B cell (primary cell): ENCODE measurements at regions of chr21 and their contacts with region 1.

Region 1: GRCh38 chr21:42117229-42117966 is 46.3 kb downstream of the UMODL1 start:
- DNase-seq: peak; percentile 82
- ATAC-seq: peak; percentile 81
- H3K4me3 ChIP-seq: no peak overlapping the region
- H3K4me3 Mint-ChIP-seq: peak overlapping the region; percentile 38
- H3K27ac ChIP-seq: no peak overlapping the region
- H3K27ac Mint-ChIP-seq: no peak overlapping the region
- H3K4me1 ChIP-seq: peaks cover 42 to 44% of the 10 kb centered on the region in 2 donors
- H3K4me1 Mint-ChIP-seq: peaks cover 51% of the 10 kb centered on the region
- H3K27me3 ChIP-seq: peaks cover 0 to 63% (median 26%) of the 10 kb centered on the region in 4 experiments
- H3K27me3 Mint-ChIP-seq: peaks cover 37% of the 10 kb centered on the region
- CTCF ChIP-seq: peak; percentile 96

Region 2: GRCh38 chr21:41437729-41438128 is 679.7 kb before region 1 on chr21:
- CTCF ChIA-PET with region 1: no interaction called
- POLR2A ChIA-PET with region 1: no interaction called
- intact Hi-C with region 1: no loop called
- DNase-seq: no peak
- ATAC-seq: no peak
- H3K4me3 ChIP-seq: no peak overlapping the region
- H3K4me3 Mint-ChIP-seq: no peak overlapping the region
- H3K27ac ChIP-seq: no peak overlapping the region
- H3K27ac Mint-ChIP-seq: no peak overlapping the region
- H3K4me1 ChIP-seq: peaks cover 4 to 5% of the 10 kb centered on the region in 2 donors
- H3K4me1 Mint-ChIP-seq: peaks cover 7% of the 10 kb centered on the region
- H3K27me3 ChIP-seq: no peaks in the 10 kb centered on the region
- H3K27me3 Mint-ChIP-seq: no peaks in the 10 kb centered on the region
- CTCF ChIP-seq: no peak

Region 3: DNA sequence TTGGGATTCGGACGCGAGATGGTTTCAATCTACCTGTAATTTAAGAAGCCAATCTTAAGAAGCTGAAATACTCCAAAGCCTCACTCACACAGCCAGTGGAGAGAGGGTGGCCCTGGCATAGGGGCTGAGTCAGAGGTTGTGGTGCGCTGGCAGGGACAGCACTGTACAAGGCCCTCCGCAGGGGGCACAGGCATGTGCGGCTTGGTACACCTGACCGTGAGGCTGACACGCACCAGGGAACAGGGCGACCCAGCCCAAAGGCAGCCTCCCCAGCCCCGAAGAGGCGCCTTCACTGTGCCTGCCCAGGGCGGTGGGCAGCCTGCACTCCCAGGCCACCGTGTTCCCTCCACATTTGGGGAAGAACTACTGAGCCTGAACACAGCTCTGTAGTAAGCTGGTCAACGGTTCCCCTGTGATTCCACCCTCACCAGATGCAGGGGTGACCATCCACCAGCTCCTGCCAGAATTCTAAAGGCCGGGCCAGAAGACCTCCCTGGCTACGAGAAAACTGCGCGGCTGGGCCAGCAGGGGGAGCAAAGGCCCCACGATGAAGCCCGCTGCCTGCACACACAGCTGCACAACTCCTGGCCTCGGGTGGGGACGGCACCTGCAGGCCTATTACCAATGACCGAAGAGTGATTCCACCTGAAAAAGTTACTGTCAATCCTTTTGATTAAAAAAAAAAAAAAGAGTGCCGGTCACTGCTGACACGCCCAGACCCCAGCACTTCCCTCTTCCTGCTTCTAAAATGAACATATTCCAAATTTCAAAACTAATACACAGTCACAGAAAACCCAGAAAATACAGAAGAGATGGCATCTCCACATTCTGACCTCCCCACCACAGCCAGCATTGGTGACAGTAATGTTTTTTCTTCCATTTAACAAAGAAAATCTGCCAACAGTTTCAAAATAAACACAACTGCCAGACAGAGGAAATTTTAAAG is 300.9 kb before region 1 on chr21:
- CTCF ChIA-PET with region 1: interaction called, 117 read pairs
- POLR2A ChIA-PET with region 1: no interaction called
- intact Hi-C with region 1: no loop called
- DNase-seq: peak; percentile 76
- ATAC-seq: peak; percentile 95
- H3K4me3 ChIP-seq: no peak overlapping the region
- H3K4me3 Mint-ChIP-seq: no peak overlapping the region
- H3K27ac ChIP-seq: no peak overlapping the region
- H3K27ac Mint-ChIP-seq: no peak overlapping the region
- H3K4me1 ChIP-seq: peaks cover 0 to 5% of the 10 kb centered on the region in 2 donors
- H3K4me1 Mint-ChIP-seq: peaks cover 8% of the 10 kb centered on the region
- H3K27me3 ChIP-seq: no peaks in the 10 kb centered on the region
- H3K27me3 Mint-ChIP-seq: no peaks in the 10 kb centered on the region
- CTCF ChIP-seq: peak; percentile 85

Region 4: GRCh38 chr21:41885341-41886029 is 231.9 kb before region 1 on chr21:
- CTCF ChIA-PET with region 1: interaction called, 15 read pairs
- POLR2A ChIA-PET with region 1: no interaction called
- intact Hi-C with region 1: no loop called
- DNase-seq: no peak
- ATAC-seq: no peak
- H3K4me3 ChIP-seq: no peak overlapping the region
- H3K4me3 Mint-ChIP-seq: no peak overlapping the region
- H3K27ac ChIP-seq: no peak overlapping the region
- H3K27ac Mint-ChIP-seq: no peak overlapping the region
- H3K4me1 ChIP-seq: peaks cover 10 to 11% of the 10 kb centered on the region in 2 donors
- H3K4me1 Mint-ChIP-seq: peaks cover 10% of the 10 kb centered on the region
- H3K27me3 ChIP-seq: no peaks in the 10 kb centered on the region
- H3K27me3 Mint-ChIP-seq: no peaks in the 10 kb centered on the region
- CTCF ChIP-seq: no peak

Region 5: DNA sequence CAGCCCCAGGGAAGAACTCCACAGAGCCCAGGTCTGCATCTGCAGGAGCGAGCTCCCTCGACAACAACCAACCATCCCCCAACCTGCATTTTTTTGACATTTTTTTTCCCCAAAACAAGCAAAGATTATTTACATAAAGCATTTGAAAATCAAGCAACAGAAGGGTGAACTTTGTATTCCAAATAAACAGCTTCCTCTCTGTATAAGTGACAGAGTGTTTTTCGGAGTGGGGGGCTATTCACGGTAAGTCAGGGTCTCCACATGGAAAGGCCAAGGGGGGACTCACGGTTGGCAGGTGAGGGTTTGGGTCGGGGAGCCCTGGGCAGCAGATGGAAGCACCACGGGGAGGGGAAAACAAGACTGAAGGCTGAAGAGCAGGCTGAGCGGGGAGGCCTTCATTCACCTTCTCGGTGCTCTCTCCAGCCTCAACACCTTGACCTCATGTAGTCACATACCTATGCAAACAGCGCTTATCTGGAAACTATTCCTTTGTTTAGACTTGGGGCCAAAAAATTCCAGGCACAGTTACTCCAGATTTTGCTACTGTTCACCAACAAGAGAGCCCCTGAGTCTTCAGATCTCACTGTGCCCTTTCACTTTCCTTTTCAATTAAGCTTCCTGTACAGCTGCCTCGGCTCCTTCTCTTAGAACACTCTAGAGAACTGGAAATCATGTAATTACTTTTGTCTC is 191.1 kb before region 1 on chr21:
- CTCF ChIA-PET with region 1: interaction called, 12 read pairs
- POLR2A ChIA-PET with region 1: no interaction called
- intact Hi-C with region 1: no loop called
- DNase-seq: peak; percentile 76
- ATAC-seq: peak; percentile 70
- H3K4me3 ChIP-seq: peak overlapping the region; percentile 55 to 70 (median 62)
- H3K4me3 Mint-ChIP-seq: peak overlapping the region; percentile 94
- H3K27ac ChIP-seq: peak overlapping the region; percentile 82 to 87
- H3K27ac Mint-ChIP-seq: peak overlapping the region; percentile 98
- H3K4me1 ChIP-seq: peaks cover 71 to 85% of the 10 kb centered on the region in 2 donors
- H3K4me1 Mint-ChIP-seq: peaks cover 81% of the 10 kb centered on the region
- H3K27me3 ChIP-seq: no peaks in the 10 kb centered on the region
- H3K27me3 Mint-ChIP-seq: no peaks in the 10 kb centered on the region
- CTCF ChIP-seq: no peak

Region 6: GRCh38 chr21:42004406-42005199 is 112.8 kb before region 1 on chr21:
- CTCF ChIA-PET with region 1: interaction called, 57 read pairs
- POLR2A ChIA-PET with region 1: interaction called, 10 read pairs
- intact Hi-C with region 1: loop called (anchors 1 kb)
- DNase-seq: no peak
- ATAC-seq: no peak
- H3K4me3 ChIP-seq: no peak overlapping the region
- H3K4me3 Mint-ChIP-seq: no peak overlapping the region
- H3K27ac ChIP-seq: no peak overlapping the region
- H3K27ac Mint-ChIP-seq: peak overlapping the region; percentile 53
- H3K4me1 ChIP-seq: peaks cover 3 to 18% of the 10 kb centered on the region in 2 donors
- H3K4me1 Mint-ChIP-seq: peaks cover 45% of the 10 kb centered on the region
- H3K27me3 ChIP-seq: no peaks in the 10 kb centered on the region
- H3K27me3 Mint-ChIP-seq: no peaks in the 10 kb centered on the region
- CTCF ChIP-seq: no peak

Region 7: GRCh38 chr21:42062236-42063022 is 55.0 kb before region 1 on chr21:
- CTCF ChIA-PET with region 1: interaction called, 16 read pairs
- POLR2A ChIA-PET with region 1: interaction called, 4 read pairs
- intact Hi-C with region 1: no loop called
- DNase-seq: peak; percentile 94
- ATAC-seq: peak; percentile 73
- H3K4me3 ChIP-seq: peak overlapping the region; percentile 3 to 79 (median 65)
- H3K4me3 Mint-ChIP-seq: peak overlapping the region; percentile 91
- H3K27ac ChIP-seq: peak overlapping the region; percentile 87 to 96
- H3K27ac Mint-ChIP-seq: peak overlapping the region; percentile 99
- H3K4me1 ChIP-seq: peaks cover 64 to 95% of the 10 kb centered on the region in 2 donors
- H3K4me1 Mint-ChIP-seq: peaks cover 82% of the 10 kb centered on the region
- H3K27me3 ChIP-seq: no peaks in the 10 kb centered on the region
- H3K27me3 Mint-ChIP-seq: no peaks in the 10 kb centered on the region
- CTCF ChIP-seq: no peak

Region 8: DNA sequence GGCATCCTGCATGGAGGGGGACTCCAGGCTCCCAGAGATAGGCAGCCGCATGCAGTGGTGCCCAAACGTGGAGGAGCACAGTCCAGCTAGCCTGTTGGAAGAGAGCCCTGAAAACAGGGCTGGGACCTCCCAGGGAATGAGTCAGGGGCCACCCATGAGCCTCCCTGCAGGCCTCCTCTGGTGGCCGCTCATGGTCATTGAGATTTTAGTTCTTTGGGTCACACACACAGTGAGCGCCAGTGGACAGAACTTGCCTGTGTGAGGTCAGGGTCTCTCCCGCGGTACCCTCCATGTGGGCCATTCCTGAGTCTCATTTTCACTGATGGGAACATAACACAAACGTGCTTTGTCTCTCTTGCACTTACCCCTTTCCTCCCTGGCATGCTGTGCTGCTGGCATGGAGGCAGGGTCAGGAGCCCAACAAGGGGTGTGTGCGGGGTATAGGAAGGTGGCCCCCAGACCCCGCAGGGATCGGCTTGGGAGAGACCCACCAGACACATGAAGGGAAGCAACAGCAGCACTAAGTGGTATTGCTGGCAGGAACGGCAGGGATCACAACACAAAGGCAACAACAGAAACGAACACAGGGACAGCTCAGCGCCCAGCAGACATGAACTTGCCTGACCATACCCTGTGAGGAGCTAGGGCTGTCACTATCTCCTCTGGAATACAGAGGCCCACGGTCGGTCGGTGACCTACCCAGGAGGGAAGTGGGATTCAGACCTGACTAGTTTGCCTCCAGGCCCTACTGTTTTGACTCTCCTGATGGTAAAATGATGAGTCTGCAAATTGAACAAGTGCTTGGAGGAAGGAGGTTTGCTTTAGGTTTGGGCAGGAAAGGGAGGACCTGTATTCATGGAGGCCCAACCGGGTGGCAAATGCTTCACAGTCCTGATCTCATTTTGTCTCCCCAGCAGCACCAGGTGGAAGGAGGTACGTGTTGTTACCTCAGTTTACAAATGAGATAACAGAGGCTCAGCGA is 133.3 kb after region 1 on chr21:
- CTCF ChIA-PET with region 1: no interaction called
- POLR2A ChIA-PET with region 1: no interaction called
- intact Hi-C with region 1: no loop called
- DNase-seq: no peak
- ATAC-seq: no peak
- H3K4me3 ChIP-seq: no peak overlapping the region
- H3K4me3 Mint-ChIP-seq: no peak overlapping the region
- H3K27ac ChIP-seq: no peak overlapping the region
- H3K27ac Mint-ChIP-seq: no peak overlapping the region
- H3K4me1 ChIP-seq: peaks cover 39 to 63% of the 10 kb centered on the region in 2 donors
- H3K4me1 Mint-ChIP-seq: peaks cover 78% of the 10 kb centered on the region
- H3K27me3 ChIP-seq: no peaks in the 10 kb centered on the region
- H3K27me3 Mint-ChIP-seq: no peaks in the 10 kb centered on the region
- CTCF ChIP-seq: no peak